ENCODE measurements at regions of chr16 and their contacts with region 1.

Region 1: GRCh38 chr16:11407047-11407982 is 62.1 kb downstream of the RMI2 start:
- DNase-seq: peak in 1 of 2 donors; percentile 91
- H3K4me3 ChIP-seq: no peak overlapping the region
- H3K27ac ChIP-seq: no peak overlapping the region
- H3K4me1 ChIP-seq: peaks cover 3 to 19% of the 10 kb centered on the region in 2 donors
- H3K27me3 ChIP-seq: no peaks in the 10 kb centered on the region
- CTCF ChIP-seq: peak; percentile 61 to 67 (median 65)

Region 2: GRCh38 chr16:10964039-10964890 is 443.1 kb before region 1 on chr16:
- intact Hi-C with region 1: loop called (anchors 5 kb)
- DNase-seq: peak; percentile 46 to 89
- H3K4me3 ChIP-seq: peak overlapping the region in 1 of 2 donors; percentile 29
- H3K27ac ChIP-seq: peak overlapping the region in 1 of 2 donors; percentile 64
- H3K4me1 ChIP-seq: peaks cover 0 to 14% of the 10 kb centered on the region in 2 donors
- H3K27me3 ChIP-seq: no peaks in the 10 kb centered on the region
- CTCF ChIP-seq: peak; percentile 92 to 94 (median 93)

Region 3: DNA sequence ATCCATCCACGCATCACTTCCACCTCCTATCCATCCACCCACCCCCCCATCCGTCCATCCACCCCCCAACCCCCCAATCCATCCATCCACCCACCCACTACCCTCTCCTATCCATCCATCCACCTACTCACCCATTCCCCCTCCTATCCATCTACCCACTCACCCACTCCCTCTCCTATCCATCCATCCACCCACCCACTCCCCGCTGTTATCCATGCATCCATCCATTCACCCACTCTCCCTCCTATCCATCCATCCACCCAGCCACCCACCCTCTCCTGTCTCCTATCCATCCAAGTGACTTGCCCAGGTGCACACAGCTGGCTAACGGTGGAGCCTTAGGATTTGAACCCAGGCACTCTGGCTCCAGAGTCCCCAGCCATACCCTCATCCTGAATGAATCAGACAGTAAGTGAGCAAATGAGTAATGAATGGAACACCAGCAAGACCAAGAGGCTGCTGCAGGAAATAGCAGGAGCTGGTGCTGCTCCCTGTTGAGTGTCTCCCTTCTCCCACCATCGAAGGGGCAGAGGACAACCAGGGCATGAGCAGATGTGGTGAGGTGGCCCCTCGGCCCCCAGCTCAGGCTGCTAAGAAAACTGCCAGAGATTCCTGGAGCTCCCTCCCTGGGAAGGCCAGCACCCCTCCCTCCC is 116.9 kb after region 1 on chr16:
- intact Hi-C with region 1: no loop called
- DNase-seq: no peak
- H3K4me3 ChIP-seq: no peak overlapping the region
- H3K27ac ChIP-seq: no peak overlapping the region
- H3K4me1 ChIP-seq: no peaks in the 10 kb centered on the region
- H3K27me3 ChIP-seq: no peaks in the 10 kb centered on the region
- CTCF ChIP-seq: no peak

Region 4: GRCh38 chr16:11534262-11534661 is 126.9 kb after region 1 on chr16:
- intact Hi-C with region 1: loop called (anchors 5 kb)
- DNase-seq: no peak
- H3K4me3 ChIP-seq: no peak overlapping the region
- H3K27ac ChIP-seq: no peak overlapping the region
- H3K4me1 ChIP-seq: no peaks in the 10 kb centered on the region
- H3K27me3 ChIP-seq: no peaks in the 10 kb centered on the region
- CTCF ChIP-seq: no peak

Region 5: GRCh38 chr16:11715246-11715947 is 308.1 kb after region 1 on chr16:
- intact Hi-C with region 1: loop called (anchors 1 kb)
- DNase-seq: no peak
- H3K4me3 ChIP-seq: no peak overlapping the region
- H3K27ac ChIP-seq: no peak overlapping the region
- H3K4me1 ChIP-seq: no peaks in the 10 kb centered on the region
- H3K27me3 ChIP-seq: no peaks in the 10 kb centered on the region
- CTCF ChIP-seq: no peak

Measured in ascending aorta (tissue), 2 donors.